AG04449 (cell line): ENCODE measurements at regions of chr15 and their contacts with region 1.

Region 1: DNA sequence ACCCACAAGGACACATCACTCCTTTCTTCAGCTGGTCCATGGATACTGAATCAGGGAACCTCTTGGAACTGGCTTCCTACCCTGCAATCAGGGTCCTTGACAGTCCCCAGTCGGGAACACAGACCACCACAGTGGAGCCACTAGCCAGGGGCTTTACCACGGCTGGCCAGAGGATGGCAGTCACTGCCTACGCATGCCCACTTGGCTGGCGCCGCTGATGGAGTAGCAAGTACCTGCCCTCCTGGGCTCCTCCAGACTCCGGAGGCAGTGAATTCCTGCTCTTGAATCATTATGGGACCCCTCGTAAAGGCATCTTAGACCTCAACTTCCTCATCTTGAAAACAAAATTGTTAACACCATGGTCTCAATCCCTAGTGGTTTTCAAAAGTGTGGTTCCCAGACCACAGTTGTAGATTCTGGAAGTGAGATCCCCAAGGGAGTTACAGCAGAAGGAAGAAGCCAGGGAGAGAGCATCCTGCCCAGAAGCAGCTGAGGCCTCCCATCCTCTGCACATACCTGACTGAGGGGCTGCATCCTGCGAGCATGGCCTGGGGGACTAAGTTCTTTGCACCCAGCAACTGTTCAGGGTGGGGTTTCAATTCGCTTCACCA is 9.1 kb upstream of the SKIC8 start:
- DNase-seq: no peak
- H3K4me3 ChIP-seq: no peak overlapping the region
- CTCF ChIP-seq: peak; percentile 95

Region 2: DNA sequence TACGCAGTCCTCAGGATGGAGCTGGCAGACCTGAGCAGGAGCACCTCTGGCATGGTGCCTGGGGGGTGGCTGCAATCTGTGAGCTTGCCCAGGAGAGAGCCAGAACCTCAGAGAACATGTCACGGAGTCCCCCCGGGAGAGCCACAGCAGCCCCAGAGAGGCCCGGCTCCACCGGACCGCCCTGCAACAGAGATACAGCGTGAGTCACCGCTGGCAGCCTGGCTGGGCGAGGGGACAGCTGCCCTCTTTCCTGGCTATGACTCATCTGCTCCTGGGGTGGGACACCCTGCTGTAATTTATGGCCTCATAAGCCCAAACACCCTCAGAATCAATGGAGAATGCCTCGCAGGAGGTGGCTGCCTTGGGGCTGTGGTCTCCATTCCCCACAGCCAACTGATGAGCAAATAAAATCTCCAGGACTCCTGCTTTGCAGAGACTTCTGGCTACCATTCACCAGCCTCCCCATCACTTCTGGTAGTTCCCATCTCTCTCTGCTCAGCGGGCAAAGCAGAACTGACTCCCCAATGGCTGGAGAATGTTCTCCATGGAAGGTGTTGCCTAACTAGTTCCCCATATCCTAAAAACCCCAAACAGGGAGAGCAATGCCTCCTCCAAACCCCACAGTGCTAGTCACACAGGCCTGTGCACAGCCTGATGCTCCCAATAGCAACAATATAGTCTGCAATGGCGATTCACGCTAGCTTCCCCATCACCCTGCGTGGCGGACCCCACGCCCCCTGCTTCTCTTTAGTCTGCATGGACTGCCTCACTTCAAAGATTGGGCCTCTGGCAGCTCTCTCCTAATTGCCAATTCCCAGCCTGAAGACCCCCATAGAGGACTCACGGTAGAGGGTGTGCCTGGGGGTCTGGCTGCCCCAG is 95.7 kb before region 1 on chr15:
- CTCF ChIA-PET with region 1: no interaction called
- POLR2A ChIA-PET with region 1: no interaction called
- DNase-seq: no peak
- H3K4me3 ChIP-seq: no peak overlapping the region
- CTCF ChIP-seq: no peak

Region 3: GRCh38 chr15:78322243-78322642 is 13.7 kb after region 1 on chr15:
- CTCF ChIA-PET with region 1: interaction called, 76 read pairs
- POLR2A ChIA-PET with region 1: no interaction called
- DNase-seq: no peak
- H3K4me3 ChIP-seq: no peak overlapping the region
- CTCF ChIP-seq: no peak

Region 4: DNA sequence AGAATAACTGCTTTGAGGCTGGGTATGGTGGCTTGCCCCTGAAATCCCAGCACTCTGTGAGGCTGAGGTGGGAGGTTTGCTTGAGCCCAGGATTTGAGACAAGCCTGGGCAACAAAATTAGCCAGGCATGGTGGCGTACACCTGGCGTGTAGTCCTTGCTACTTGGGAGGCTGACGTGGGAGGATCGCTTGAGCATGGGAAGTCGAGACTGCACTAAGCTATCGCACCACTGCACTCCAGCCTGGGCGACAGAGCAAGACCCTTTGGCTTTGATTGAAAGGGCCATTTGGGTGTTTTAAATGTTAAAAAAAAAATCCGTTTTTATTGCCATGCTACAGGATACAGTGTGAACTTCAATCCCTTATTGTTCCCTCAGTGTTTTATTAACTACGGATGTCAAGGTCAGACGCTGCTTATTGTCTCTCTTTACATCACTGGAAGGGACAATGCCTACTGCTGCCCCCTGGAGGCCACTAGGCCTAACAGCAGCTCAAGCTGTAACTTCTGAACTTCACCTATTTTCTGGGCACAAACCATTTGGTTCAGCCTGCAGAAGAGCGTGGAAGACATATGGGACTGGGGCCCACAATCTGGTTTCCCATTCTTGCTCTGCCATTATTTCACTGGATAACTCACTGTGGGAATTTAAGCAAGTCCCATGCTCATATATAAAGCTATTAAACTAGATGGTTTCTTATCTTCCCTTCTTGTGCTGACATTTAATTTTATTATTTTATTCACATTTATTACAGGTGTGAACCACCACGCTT is 114.2 kb after region 1 on chr15:
- CTCF ChIA-PET with region 1: interaction called, 714 read pairs
- POLR2A ChIA-PET with region 1: no interaction called
- DNase-seq: no peak
- H3K4me3 ChIP-seq: no peak overlapping the region
- CTCF ChIP-seq: peak; percentile 88

Region 5: GRCh38 chr15:78437762-78438302 is 129.3 kb after region 1 on chr15 and contains the start of gene IREB2:
- CTCF ChIA-PET with region 1: interaction called, 22 read pairs
- POLR2A ChIA-PET with region 1: interaction called, 4 read pairs
- DNase-seq: peak; percentile 86
- H3K4me3 ChIP-seq: peak within 1 kb of the TSS; percentile 95
- CTCF ChIP-seq: no peak

Region 6: DNA sequence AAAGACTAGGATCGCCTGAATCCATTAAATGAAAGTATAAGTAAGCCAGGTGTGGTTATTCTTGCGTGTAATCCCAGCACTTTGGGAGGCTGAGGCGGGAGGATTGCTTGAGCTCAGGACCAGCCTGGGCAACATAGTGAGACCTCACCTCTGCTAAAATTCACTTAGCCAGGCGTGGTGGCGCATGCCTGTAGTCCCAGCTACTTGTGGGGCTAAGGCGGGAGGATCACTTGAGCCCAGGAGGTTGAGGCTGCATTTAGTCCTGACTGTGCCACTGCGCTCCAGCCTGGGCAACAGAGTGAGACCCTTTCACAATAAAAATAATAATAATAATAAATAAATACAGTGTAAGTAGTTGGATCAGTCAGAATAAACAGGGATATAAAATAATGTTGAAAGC is 173.4 kb after region 1 on chr15:
- CTCF ChIA-PET with region 1: interaction called, 13 read pairs
- POLR2A ChIA-PET with region 1: no interaction called
- DNase-seq: no peak
- H3K4me3 ChIP-seq: no peak overlapping the region
- CTCF ChIP-seq: no peak